ENCODE measurements at regions of chr10 and their contacts with region 1.

Region 1: DNA sequence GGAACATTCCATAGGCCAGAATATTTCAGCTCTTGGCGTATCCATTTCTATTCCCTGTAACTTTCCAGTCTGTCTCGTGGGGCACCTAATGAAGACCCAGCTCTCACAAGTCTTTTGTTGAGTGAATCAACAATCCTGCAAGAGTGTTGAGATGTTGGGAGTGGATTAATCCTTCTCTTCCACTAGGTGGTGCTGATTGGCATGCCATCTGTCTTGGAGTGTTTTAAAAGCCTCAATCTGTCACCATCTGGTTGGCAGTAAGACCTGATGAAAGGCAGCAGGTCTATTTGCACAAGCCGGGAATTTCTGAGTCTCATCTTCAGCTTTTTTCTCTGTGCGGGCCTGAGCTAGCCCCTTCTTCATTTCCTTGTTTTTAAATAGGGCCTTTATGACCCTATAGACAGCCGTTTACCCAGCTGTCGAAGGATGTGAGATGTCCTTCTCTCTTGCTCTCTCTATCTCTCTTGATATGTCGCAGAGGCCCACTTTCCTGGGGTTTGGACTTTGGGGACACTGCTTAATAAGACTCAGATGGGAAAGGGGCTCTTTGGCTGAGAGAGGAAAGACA is 180.5 kb downstream of the ZNF365 start:
- DNase-seq: peak; percentile 31
- CTCF ChIP-seq: peak; percentile 28

Region 2: GRCh38 chr10:62384057-62384446 is 170.7 kb before region 1 on chr10:
- CTCF ChIA-PET with region 1: no interaction called
- POLR2A ChIA-PET with region 1: no interaction called
- DNase-seq: no peak
- CTCF ChIP-seq: no peak

Region 3: DNA sequence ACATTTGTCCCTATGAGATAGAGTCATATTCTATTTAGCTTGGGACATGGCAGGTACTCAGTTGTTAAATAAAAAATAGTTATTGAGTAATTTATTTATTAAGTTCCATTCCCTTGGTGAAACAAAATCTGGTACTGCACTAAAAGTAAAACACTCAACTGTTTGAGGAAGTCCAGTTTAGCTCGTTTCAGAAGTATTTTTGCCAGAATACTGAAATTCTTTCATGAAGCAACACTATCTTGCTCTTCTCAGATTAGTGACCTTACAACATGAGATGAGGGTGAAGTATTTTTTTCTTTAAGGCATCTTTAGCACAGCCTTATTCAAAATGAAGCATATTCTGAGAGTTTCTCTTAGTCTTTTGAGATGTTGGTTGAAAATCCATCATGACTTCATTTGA is 74.5 kb before region 1 on chr10:
- CTCF ChIA-PET with region 1: no interaction called
- POLR2A ChIA-PET with region 1: no interaction called
- DNase-seq: no peak
- CTCF ChIP-seq: no peak

Region 4: DNA sequence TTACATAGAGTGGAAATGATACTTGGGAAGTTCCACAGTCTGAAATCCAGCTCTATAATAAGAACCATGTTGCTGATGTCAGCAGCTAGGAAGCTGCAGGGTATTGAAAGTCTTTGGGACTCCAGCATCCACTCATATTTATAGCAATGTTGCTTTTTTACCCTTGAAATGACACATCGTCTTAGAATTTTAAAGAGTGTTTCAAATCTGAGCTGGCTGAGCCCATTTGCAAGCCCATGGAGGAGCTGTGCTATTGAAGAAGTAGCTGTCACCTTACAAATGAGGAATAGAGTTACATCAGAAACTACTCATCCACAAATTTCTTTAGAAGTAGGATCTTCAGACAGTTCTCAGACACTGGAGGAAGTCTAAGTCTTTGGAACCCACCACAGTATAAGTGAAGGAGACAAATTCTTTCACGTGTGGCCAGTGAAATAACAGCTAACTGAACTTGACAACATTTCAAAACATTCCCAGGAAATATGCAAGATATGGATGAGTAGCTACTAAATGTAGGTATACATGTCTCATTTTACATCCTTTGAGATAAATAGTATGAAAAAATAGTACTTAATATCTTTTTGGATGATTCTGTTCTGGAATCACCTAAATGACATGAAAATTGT is 23.1 kb after region 1 on chr10:
- CTCF ChIA-PET with region 1: interaction called, 16 read pairs
- POLR2A ChIA-PET with region 1: no interaction called
- DNase-seq: no peak
- CTCF ChIP-seq: no peak